Esophagus squamous epithelium (tissue), 5 donors: ENCODE measurements at regions of chr5 and their contacts with region 1.

Region 1: DNA sequence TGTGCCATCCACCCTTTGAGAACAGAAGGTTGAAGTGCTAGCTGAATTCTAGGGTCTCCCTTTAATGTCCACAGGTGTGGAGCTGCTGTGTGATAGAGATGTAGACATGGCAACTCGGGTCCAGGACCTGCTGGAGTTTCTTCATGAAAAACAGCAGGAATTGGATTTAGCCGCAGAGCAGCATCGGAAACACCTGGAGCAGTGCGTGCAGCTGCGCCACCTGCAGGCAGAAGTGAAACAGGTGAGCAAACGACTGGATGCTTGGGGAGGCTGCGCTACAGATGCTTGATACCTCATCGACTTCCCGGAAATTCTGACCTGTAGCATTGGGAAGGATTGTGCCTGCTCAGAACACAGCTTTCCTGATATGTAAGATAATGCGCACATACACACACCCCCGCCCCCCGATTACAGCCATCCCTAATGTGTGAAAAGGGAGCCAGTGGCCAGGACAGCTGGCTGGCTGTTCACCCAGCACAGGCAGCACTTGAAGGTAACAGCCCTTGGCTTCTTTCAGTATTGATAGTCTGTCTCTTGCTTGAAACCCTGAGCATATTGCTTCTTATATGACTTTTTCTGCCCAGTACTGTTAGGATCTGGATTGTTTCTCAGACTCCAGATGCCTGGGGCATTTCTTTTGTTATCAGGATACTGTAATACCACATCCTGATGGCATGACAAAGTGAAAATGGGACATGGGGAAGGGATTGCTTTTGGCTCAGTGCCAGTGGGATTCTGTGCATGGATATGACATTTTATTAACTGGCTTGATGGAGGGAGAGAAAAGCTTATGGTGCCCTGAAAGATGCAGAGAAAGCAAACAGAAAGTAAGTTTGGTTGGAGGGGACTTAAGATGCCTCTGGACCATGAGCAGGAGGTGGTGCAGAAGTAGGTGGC is 216.8 kb upstream of the OTULINL start:
- DNase-seq: no peak
- H3K4me3 ChIP-seq: no peak overlapping the region
- H3K27ac ChIP-seq: no peak overlapping the region
- H3K4me1 ChIP-seq: no peaks in the 10 kb centered on the region
- H3K27me3 ChIP-seq: no peaks in the 10 kb centered on the region
- CTCF ChIP-seq: peak; percentile 25 to 68 (median 41)
- POLR2A ChIP-seq: no peak

Region 2: DNA sequence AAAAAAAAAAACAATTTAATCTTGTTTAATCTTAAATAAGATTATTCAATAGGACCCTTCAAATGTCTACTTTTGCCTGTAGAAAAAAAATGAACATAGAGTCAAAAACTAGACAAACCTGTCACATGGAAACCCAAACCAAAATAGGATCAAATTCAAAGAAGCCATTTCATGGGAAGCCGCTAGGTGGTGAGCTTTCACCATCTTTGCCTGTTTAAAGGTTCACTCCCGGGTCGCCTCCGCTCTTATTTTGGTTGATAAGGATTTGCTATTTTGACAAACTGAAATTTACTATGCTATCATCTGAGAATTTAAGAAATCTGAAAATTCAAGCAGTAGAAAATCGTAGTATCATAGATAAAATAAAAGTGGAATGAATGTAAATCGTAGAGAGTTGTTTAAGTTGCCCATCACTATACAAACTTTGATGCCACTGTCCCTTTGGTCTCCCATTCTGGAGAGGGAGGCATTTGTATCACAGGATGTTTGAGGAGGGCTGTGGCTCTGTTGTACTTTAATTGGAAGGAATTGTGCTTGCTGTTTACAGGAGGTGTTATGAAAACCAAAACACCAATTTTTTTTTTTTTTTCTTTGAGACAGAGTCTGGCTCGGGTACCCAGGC is 376.9 kb before region 1 on chr5:
- intact Hi-C with region 1: loop called (anchors 10 kb)
- DNase-seq: no peak
- H3K4me3 ChIP-seq: no peak overlapping the region
- H3K27ac ChIP-seq: no peak overlapping the region
- H3K4me1 ChIP-seq: no peaks in the 10 kb centered on the region
- H3K27me3 ChIP-seq: peaks cover 0 to 20% (median 0%) of the 10 kb centered on the region in 4 donors
- CTCF ChIP-seq: peak; percentile 60 to 88 (median 84)
- POLR2A ChIP-seq: no peak

Region 3: GRCh38 chr5:14118527-14119320 is 246.1 kb before region 1 on chr5:
- intact Hi-C with region 1: loop called (anchors 10 kb)
- DNase-seq: no peak
- H3K4me3 ChIP-seq: no peak overlapping the region
- H3K27ac ChIP-seq: no peak overlapping the region
- H3K4me1 ChIP-seq: peaks cover 0 to 5% (median 0%) of the 10 kb centered on the region in 3 donors
- H3K27me3 ChIP-seq: peaks cover 0 to 6% (median 0%) of the 10 kb centered on the region in 4 donors
- CTCF ChIP-seq: no peak
- POLR2A ChIP-seq: no peak